Activated CD8-positive, alpha-beta memory T cell treated with anti-CD3 and anti-CD28 coated beads, Interleukin-2, amount 10 ng/mL, durations not matched to agents 7 days and 5 days (primary cell): ENCODE measurements at regions of chr17 and their contacts with region 1.

Region 1: GRCh38 chr17:65100316-65101140 is 36.6 kb upstream of the RGS9 start:
- DNase-seq: peak; percentile 85
- ATAC-seq: peak; percentile 92
- H3K4me3 Mint-ChIP-seq: peak overlapping the region; percentile 77
- H3K27ac Mint-ChIP-seq: peak overlapping the region; percentile 90
- H3K4me1 Mint-ChIP-seq: peaks cover 22% of the 10 kb centered on the region
- H3K27me3 Mint-ChIP-seq: peaks cover 5% of the 10 kb centered on the region

Region 2: DNA sequence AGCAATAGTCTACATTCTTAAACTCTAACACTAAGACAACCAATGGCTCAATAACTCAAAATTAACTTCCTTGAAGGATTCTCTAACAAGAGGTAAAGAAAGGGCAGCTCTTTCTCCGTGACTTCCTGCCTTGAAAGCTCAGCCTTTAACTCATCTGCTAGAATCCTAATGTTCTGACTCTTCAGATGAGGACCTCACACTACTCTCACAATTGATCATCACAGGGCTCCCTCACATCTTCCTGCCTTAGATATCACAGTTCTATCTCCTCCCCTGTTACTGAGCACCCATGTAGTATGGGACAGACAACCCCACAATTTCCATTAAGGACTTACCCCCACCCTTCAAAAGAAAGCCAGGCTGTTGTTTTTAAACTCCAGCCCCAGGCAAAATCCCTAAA is 471.9 kb before region 1 on chr17:
- CTCF ChIA-PET with region 1: no interaction called
- DNase-seq: peak; percentile 52
- ATAC-seq: peak; percentile 97
- H3K4me3 Mint-ChIP-seq: peak overlapping the region; percentile 47
- H3K27ac Mint-ChIP-seq: peak overlapping the region; percentile 57
- H3K4me1 Mint-ChIP-seq: peaks cover 36% of the 10 kb centered on the region
- H3K27me3 Mint-ChIP-seq: no peaks in the 10 kb centered on the region

Region 3: DNA sequence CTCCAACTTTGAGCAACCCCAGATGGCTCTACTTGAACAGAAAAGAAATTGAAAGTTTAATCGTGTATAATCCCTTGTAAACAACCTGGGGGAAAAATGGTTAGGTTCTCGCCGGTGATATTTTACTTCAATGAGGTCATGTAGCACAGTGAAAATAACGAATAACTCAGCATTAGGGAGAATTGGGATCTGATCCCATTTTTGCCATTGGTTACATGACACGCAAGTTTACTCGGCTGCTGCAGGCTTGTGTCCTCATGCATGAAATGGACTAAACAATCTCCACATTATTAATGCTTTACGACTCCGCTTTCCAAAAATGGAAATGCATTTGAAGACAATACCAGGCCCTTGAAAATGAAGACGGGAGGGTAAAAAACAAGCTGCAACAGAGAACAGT is 135.7 kb before region 1 on chr17:
- CTCF ChIA-PET with region 1: interaction called, 19 read pairs
- DNase-seq: no peak
- ATAC-seq: no peak
- H3K4me3 Mint-ChIP-seq: no peak overlapping the region
- H3K27ac Mint-ChIP-seq: no peak overlapping the region
- H3K4me1 Mint-ChIP-seq: peaks cover 62% of the 10 kb centered on the region
- H3K27me3 Mint-ChIP-seq: no peaks in the 10 kb centered on the region

Region 4: GRCh38 chr17:65035175-65035574 is 65.4 kb before region 1 on chr17:
- CTCF ChIA-PET with region 1: interaction called, 16 read pairs
- DNase-seq: no peak
- ATAC-seq: no peak
- H3K4me3 Mint-ChIP-seq: no peak overlapping the region
- H3K27ac Mint-ChIP-seq: peak overlapping the region; percentile 50
- H3K4me1 Mint-ChIP-seq: peaks cover 59% of the 10 kb centered on the region
- H3K27me3 Mint-ChIP-seq: no peaks in the 10 kb centered on the region

Region 5: DNA sequence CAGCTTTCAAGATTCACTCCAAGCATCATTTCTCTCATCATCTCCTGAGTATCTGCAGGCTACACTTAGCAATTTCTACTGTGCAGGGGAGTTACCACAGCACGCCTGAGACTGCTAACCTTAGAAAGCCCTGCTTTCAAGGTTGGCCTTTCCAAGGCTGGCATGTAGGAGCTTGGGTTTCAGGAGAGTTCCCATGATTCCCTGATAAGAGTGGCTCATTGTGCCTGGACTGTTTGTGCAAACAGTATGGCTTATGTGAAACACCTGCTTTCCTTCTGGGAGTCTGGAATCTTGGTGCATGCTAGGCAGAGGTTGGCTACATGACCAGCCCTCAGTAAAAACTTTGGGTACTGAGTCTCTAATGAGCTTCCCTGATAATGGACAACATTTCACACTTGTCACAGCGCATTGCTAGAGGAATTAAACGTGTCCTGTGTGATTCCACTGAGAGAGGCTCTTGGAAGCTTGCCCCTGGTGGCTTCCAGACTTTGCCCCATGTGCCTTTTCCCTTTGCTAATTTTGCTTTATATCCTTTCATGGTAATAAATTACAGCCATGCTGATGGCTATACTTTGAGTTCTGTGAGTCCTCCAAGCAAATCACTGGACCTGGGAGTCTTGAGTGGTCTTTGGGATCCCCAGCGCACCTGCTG is 17.0 kb after region 1 on chr17:
- CTCF ChIA-PET with region 1: interaction called, 14 read pairs
- DNase-seq: no peak
- ATAC-seq: no peak
- H3K4me3 Mint-ChIP-seq: no peak overlapping the region
- H3K27ac Mint-ChIP-seq: no peak overlapping the region
- H3K4me1 Mint-ChIP-seq: peaks cover 26% of the 10 kb centered on the region
- H3K27me3 Mint-ChIP-seq: peaks cover 20% of the 10 kb centered on the region

Region 6: DNA sequence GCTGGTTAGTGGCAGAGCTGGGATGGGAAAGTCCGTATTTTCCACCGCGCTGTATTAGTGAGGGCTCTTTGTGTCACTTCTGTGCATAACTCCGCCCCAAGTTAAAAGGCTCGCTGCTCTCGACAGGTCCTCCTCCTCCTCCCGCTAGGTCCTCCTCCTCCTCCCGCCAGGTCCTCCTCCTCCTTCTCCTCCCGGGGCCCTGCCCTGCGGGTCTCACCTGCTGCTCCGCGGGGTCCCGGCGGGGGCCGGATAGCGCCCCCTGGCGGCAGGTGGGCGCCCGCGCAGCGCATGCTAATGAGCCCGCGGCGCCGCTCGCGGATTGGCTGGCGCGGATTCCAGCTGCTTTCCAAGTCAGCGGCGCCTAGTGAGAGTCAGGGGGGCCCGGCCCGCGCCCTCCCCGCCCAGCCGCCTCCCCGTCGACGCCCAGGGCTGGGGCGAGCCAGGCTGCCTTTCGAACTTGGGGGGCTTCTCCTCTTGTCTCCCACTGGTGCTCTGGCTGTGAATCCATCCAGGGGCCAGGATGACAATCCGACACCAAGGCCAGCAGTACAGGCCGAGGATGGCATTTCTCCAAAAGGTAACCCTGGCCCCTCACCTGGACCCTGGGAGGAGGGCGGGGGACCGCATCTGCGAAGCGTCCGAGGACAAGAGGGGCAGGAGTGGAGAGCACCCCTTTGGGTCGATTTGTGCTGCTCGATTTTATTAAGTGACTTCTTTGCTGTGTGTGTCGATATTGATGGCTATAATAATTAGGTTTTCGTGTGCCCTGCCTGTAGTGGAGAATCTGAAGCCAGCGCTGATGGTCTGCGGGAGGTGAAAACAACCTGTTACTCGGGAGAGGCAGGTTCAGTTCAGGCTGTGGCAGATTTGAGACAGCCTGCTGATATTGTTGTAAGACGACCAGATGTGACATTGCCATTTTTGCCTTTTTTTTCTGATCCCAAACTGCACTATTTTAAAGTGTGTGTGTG is 36.8 kb after region 1 on chr17 and contains the start of gene RGS9:
- CTCF ChIA-PET with region 1: interaction called, 35 read pairs
- DNase-seq: peak; percentile 88
- ATAC-seq: peak; percentile 99
- H3K4me3 Mint-ChIP-seq: peak within 1 kb of the TSS; percentile 77
- H3K27ac Mint-ChIP-seq: peak within 1 kb of the TSS; percentile 76
- H3K4me1 Mint-ChIP-seq: peaks cover 39% of the 10 kb centered on the region
- H3K27me3 Mint-ChIP-seq: peaks cover 16% of the 10 kb centered on the region
- total RNA-seq, gene RGS9: 4.7 to 16.0 TPM